A673 (cell line): ENCODE measurements at regions of chr12 and their contacts with region 1.

Region 1: DNA sequence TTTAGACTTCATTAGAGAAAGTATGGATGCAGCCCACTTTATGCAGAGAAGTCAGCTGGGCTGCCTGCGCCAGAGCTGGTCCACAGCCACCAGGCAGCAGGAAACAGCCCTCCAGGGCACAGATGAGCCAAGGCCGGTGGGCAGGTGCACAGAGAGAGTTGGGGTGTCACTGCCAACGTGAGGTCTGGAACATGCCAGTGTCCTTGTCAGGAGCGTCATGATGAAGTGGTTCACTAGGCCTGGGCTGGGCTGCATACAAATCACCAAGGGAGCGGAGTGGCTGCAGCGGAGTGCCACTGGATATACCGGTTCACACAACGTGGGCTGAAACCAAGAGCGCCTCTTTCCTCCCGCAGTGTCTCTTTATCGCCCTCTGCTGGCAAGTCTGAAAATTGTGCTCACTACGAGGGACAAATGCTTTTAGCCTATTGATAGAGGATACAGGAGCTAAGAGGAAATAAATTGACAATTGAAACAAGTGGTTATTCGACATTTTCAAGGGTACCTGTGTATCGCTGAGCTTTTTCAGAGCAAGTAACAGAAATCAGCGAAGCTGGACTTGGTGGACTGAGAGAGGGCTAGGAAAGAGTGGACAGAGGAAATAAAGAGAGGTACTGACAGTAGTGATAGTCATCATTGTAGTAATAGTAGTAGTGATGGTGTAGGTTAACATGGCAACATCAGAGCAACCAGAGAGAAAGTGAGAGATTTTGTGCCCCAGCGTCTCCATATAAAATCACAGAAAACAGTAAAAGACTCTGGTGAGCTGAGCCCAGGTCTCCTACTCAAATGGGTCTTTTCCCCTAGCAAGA is 52.0 kb upstream of the ITPR2 start:
- DNase-seq: peak; percentile 89
- H3K4me3 ChIP-seq: no peak overlapping the region
- H3K27ac ChIP-seq: no peak overlapping the region
- H3K4me1 ChIP-seq: no peaks in the 10 kb centered on the region
- H3K27me3 ChIP-seq: no peaks in the 10 kb centered on the region
- CTCF ChIP-seq: peak; percentile 97

Region 2: GRCh38 chr12:26113853-26114719 is 770.9 kb before region 1 on chr12:
- CTCF ChIA-PET with region 1: no interaction called
- POLR2A ChIA-PET with region 1: no interaction called
- intact Hi-C with region 1: loop called (anchors 10 kb)
- DNase-seq: peak; percentile 88
- H3K4me3 ChIP-seq: peak overlapping the region; percentile 63
- H3K27ac ChIP-seq: peak overlapping the region; percentile 67
- H3K4me1 ChIP-seq: peaks cover 18% of the 10 kb centered on the region
- H3K27me3 ChIP-seq: no peaks in the 10 kb centered on the region
- CTCF ChIP-seq: no peak; the same call in 1 of the 2 replicates

Region 3: DNA sequence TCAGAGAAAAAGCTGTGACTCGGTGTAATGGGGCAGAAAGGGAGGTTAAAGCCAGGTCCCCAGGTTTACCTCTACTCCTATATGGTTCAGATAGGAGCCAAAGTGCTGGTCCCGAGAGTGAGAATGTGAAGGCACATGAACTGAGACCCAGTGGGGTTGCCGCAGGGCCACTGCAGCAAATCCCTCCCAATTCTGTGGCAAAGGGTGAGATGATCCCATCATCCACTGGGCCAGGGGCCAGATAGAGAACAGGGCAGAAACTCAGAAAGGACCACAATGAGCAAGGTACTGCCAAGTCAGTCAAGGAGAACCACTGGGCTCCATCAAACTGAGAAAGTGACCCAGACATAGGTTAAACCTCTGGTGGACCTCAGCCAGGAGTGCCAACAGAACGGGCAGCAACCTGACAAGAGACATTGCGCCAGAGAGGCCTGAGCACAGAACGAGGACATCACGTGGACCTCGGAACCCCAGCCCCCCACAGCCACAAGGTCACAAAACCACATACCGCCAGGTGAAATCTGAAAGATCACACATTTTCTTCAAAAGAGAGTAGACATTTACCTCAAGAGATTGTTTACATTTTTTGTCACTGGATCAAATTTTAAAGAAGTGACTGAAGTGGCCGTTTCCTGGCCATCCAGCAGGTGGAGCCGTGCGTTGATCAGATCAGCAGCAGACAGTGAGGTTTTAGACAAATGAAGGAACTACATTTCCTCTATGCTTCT is 31.5 kb before region 1 on chr12:
- CTCF ChIA-PET with region 1: no interaction called
- POLR2A ChIA-PET with region 1: no interaction called
- intact Hi-C with region 1: loop called (anchors 2 kb)
- DNase-seq: peak; percentile 66
- H3K4me3 ChIP-seq: no peak overlapping the region
- H3K27ac ChIP-seq: no peak overlapping the region
- H3K4me1 ChIP-seq: peaks cover 6% of the 10 kb centered on the region
- H3K27me3 ChIP-seq: no peaks in the 10 kb centered on the region
- CTCF ChIP-seq: peak; percentile 95